CD4-positive, alpha-beta memory T cell (primary cell): ENCODE measurements at regions of chr10 and their contacts with region 1.

Region 1: GRCh38 chr10:60769406-60769805 is 8.9 kb upstream of the CDK1 start:
- DNase-seq: no peak
- H3K4me3 ChIP-seq: no peak overlapping the region
- H3K4me3 Mint-ChIP-seq: no peak overlapping the region
- H3K27ac ChIP-seq: no peak overlapping the region
- H3K27ac Mint-ChIP-seq: peak overlapping the region in 1 of 7 donors; percentile 5
- H3K4me1 ChIP-seq: peaks cover 10% of the 10 kb centered on the region
- H3K4me1 Mint-ChIP-seq: peaks cover 6 to 11% (median 8%) of the 10 kb centered on the region in 4 donors
- H3K27me3 ChIP-seq: no peaks in the 10 kb centered on the region
- H3K27me3 Mint-ChIP-seq: peaks cover 0 to 2% of the 10 kb centered on the region in 2 donors

Region 2: DNA sequence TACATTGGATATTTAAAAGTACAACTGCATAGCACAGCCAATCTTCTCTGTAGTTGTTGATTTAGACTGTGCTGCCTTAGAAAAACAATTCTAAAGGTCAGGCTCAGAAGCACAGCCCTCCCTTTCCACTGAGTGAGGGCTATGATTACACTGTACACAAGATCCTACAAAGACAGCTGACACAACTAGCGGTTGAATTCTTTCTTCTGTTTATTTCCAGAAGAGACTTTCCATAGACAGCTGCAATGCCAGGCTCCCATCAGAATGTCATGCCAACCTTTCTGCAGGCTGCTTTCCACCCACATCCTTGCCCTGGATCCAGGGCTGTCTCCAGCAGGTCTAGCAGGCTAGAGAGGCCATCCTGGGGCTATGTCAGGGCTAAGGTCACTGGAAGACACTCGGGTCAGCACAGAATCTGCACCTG is 1446.4 kb before region 1 on chr10:
- CTCF ChIA-PET with region 1: no interaction called
- POLR2A ChIA-PET with region 1: no interaction called
- intact Hi-C with region 1: no loop called
- DNase-seq: no peak
- H3K4me3 ChIP-seq: no peak overlapping the region
- H3K4me3 Mint-ChIP-seq: no peak overlapping the region
- H3K27ac ChIP-seq: no peak overlapping the region
- H3K27ac Mint-ChIP-seq: no peak overlapping the region
- H3K4me1 ChIP-seq: no peaks in the 10 kb centered on the region
- H3K4me1 Mint-ChIP-seq: no peaks in the 10 kb centered on the region
- H3K27me3 ChIP-seq: no peaks in the 10 kb centered on the region
- H3K27me3 Mint-ChIP-seq: no peaks in the 10 kb centered on the region

Region 3: GRCh38 chr10:60208676-60209269 is 560.6 kb before region 1 on chr10:
- CTCF ChIA-PET with region 1: interaction called, 5 read pairs
- POLR2A ChIA-PET with region 1: no interaction called
- intact Hi-C with region 1: loop called (anchors 1 kb)
- DNase-seq: no peak
- H3K4me3 ChIP-seq: no peak overlapping the region
- H3K4me3 Mint-ChIP-seq: no peak overlapping the region
- H3K27ac ChIP-seq: no peak overlapping the region
- H3K27ac Mint-ChIP-seq: no peak overlapping the region
- H3K4me1 ChIP-seq: peaks cover 18% of the 10 kb centered on the region
- H3K4me1 Mint-ChIP-seq: peaks cover 25 to 32% (median 26%) of the 10 kb centered on the region in 4 donors
- H3K27me3 ChIP-seq: no peaks in the 10 kb centered on the region
- H3K27me3 Mint-ChIP-seq: no peaks in the 10 kb centered on the region

Region 4: GRCh38 chr10:60549686-60550085 is 219.7 kb before region 1 on chr10:
- CTCF ChIA-PET with region 1: interaction called, 8 read pairs
- POLR2A ChIA-PET with region 1: no interaction called
- intact Hi-C with region 1: loop called (anchors 1 kb)
- DNase-seq: peak in 1 of 5 donors; percentile 18
- H3K4me3 ChIP-seq: no peak overlapping the region
- H3K4me3 Mint-ChIP-seq: no peak overlapping the region
- H3K27ac ChIP-seq: no peak overlapping the region
- H3K27ac Mint-ChIP-seq: no peak overlapping the region
- H3K4me1 ChIP-seq: no peaks in the 10 kb centered on the region
- H3K4me1 Mint-ChIP-seq: peaks cover 0 to 5% (median 2%) of the 10 kb centered on the region in 4 donors
- H3K27me3 ChIP-seq: no peaks in the 10 kb centered on the region
- H3K27me3 Mint-ChIP-seq: no peaks in the 10 kb centered on the region

Region 5: DNA sequence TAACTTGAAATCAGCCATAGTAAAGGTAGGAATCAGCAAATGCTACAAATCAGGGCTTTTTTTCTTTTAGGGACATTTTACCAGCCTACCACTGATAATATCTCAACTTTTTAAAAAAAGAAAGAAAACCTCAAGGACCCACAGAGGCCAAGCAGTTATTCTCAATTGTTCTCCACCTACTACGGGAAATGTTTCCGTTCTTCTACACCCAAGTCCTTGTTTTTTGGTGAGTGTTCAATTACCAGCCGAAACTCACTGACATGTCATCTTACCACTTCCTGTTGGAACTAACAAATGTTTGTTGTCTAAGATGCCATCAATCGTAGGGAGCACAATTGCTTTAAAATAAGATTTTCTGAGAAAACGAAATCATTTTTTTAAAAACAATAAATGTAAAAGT is 41.4 kb before region 1 on chr10:
- CTCF ChIA-PET with region 1: interaction called, 15 read pairs
- POLR2A ChIA-PET with region 1: no interaction called
- intact Hi-C with region 1: loop called (anchors 2 kb)
- DNase-seq: peak; percentile 56 to 84 (median 75)
- H3K4me3 ChIP-seq: peak overlapping the region in 1 of 2 donors; percentile 42
- H3K4me3 Mint-ChIP-seq: peak overlapping the region; percentile 68 to 86 (median 84)
- H3K27ac ChIP-seq: peak overlapping the region; percentile 72
- H3K27ac Mint-ChIP-seq: peak overlapping the region; percentile 89 to 96 (median 91)
- H3K4me1 ChIP-seq: peaks cover 72% of the 10 kb centered on the region
- H3K4me1 Mint-ChIP-seq: peaks cover 61 to 83% (median 75%) of the 10 kb centered on the region in 4 donors
- H3K27me3 ChIP-seq: no peaks in the 10 kb centered on the region
- H3K27me3 Mint-ChIP-seq: no peaks in the 10 kb centered on the region

Region 6: DNA sequence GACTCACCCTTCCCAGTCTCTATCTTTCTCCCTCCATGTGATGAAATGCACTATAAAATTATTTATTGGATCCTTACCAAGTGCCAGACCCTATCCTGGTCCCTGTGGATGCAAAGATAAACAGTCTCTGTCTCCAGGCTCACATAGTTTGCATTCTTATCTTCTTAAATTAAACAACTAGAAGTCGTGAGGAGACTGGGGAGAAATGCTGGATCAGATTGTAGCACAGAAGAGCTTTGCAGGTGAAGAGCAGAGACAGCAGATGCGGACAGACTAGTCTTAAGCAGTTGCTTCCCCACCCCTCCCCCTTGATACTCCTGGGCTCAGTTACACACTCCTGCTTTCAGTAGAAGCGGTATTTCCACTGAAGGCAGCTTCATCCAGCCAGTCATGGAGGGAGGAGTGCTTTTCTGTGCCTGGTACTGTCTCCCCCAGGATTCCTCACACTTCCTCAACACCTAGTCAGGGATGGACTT is 11.9 kb before region 1 on chr10:
- CTCF ChIA-PET with region 1: interaction called, 14 read pairs
- POLR2A ChIA-PET with region 1: no interaction called
- intact Hi-C with region 1: no loop called
- DNase-seq: no peak
- H3K4me3 ChIP-seq: no peak overlapping the region
- H3K4me3 Mint-ChIP-seq: no peak overlapping the region
- H3K27ac ChIP-seq: no peak overlapping the region
- H3K27ac Mint-ChIP-seq: no peak overlapping the region
- H3K4me1 ChIP-seq: no peaks in the 10 kb centered on the region
- H3K4me1 Mint-ChIP-seq: no peaks in the 10 kb centered on the region
- H3K27me3 ChIP-seq: no peaks in the 10 kb centered on the region
- H3K27me3 Mint-ChIP-seq: peaks cover 5 to 13% of the 10 kb centered on the region in 2 donors